Activated CD4-positive, alpha-beta memory T cell treated with anti-CD3 and anti-CD28 coated beads, Interleukin-2, amount 10 ng/mL, durations not matched to agents 7 days and 5 days (primary cell): ENCODE measurements at regions of chr19 and their contacts with region 1.

Region 1: DNA sequence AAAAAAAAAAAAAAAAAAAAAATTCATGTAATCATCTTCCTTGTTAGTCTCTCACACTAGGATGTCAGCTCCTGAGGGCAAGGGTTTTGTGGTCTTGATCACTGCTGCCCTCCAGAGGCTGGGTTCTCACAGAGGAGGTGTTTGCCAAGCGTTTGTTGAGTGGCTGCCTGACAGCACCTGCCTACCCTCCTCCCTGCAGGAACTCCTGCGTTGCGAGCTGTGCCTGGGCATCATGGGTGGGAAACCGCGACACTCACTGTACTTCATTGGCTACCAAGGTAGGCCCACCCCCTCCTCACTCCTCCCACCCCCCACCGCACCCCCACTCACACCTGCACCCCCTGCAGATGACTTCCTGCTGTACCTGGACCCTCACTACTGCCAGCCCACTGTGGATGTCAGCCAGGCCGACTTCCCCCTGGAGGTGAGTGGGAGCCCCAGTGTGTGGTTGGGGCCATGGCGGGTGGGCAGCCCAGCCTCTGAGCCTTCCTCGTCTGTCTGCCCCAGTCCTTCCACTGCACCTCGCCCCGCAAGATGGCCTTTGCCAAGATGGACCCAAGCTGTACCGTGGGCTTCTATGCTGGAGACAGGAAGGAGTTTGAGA is 8.1 kb downstream of the ATG4D start:
- DNase-seq: peak; percentile 63
- H3K4me3 Mint-ChIP-seq: no peak overlapping the region
- H3K27ac Mint-ChIP-seq: peak overlapping the region; percentile 56
- H3K4me1 Mint-ChIP-seq: peaks cover 52% of the 10 kb centered on the region
- H3K27me3 Mint-ChIP-seq: no peaks in the 10 kb centered on the region

Region 2: DNA sequence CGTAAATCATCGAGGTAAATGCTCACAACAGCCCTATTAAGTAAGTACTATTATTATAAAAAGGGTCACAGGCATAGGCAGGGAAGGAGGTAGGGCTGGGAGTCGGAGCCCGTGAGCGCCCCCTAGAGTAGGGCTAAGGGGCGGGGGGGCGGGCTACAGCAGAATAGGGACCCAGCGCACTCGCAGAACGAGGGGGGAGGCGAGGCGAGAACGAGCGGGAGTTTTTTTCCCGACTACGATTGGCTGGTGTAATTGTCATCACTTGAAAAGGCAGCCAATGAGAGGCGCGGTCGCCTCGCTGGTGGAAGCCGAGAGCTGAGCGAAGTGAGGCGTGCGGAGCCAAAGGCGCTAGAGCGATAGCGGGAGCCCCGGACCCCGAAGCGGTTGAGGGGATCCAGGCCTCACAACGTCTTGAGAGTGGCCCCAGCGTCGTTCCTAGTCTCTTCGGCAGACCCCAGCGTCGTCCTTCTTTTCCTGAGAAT is 72.9 kb before region 1 on chr19:
- CTCF ChIA-PET with region 1: interaction called, 12 read pairs
- POLR2A ChIA-PET with region 1: interaction called, 3 read pairs
- DNase-seq: peak; percentile 88
- H3K4me3 Mint-ChIP-seq: no peak overlapping the region
- H3K27ac Mint-ChIP-seq: no peak overlapping the region
- H3K4me1 Mint-ChIP-seq: peaks cover 24% of the 10 kb centered on the region
- H3K27me3 Mint-ChIP-seq: no peaks in the 10 kb centered on the region